ENCODE measurements at regions of chr7 and their contacts with region 1.

Region 1: DNA sequence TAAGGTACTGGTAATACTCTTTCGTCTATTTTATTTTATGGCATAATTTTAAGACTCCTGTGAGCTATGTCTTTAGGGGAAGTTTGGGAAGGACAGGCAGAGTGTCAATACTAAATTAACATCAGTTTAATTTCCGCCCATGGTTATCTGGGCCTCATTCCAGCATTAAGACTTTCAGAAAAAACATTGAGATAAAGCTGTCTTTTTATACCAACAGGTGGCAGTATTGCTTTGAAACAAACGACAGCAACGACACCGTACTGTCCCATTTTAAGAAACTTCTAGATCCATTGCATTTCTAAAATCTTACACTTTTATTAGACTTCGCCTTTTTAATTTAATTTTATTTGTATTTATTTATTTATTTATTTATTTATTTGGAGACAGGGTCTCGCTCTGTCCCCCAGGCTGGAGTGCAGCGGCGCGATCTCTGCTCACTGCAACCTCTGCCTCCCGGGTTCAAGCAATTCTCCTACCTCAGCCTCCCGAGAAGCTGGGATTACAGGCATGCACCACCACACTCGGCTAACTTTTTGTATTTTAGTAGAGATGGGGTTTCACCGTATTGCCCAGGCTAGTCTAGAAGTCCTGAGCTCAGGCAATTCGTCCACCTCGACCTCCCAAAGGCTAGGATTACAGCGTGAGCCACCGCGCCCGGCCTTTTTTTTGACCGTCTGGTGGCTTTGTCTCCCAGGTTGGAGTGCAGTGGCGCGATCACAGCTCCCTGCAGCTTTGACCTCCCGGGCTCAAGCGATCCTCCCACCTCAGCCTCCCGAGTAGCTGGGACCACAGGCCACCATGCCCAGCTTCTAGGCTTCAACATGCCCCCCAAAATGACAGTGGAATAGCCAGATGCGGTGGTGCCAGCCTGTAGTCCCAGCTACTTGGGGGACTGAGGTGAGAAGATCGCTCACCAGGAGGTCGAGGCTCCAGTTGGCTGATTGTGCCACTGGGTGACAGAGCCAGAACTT is 78.7 kb upstream of the C1GALT1 start:
- DNase-seq: no peak
- H3K4me3 ChIP-seq: peak overlapping the region in 1 of 3 donors; percentile 17
- H3K27ac ChIP-seq: peak overlapping the region in 1 of 2 donors; percentile 37
- H3K4me1 ChIP-seq: no peaks in the 10 kb centered on the region
- H3K27me3 ChIP-seq: no peaks in the 10 kb centered on the region
- CTCF ChIP-seq: peak; percentile 60 to 73 (median 67)
- POLR2A ChIP-seq: no peak

Region 2: DNA sequence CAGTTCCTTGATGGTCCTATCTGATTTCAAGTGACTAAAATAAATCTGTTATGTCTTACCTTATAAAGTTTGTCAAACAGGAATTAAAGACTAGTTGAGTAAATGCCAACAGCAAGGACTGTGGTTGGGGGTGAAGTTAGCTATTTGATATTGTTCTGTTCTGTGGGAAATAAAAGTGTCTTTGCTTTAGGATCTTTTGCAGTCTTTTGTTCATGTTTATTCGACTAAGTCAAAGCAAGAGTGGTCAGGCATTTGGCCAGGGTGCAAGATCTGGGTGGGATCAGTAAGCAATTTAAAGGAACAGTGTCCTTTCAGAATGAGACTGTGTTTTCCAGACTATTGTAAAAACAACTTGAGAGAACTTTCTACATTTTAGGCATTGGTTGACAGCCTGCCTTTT is 432.1 kb after region 1 on chr7 and contains the start of gene COL28A1:
- intact Hi-C with region 1: loop called (anchors 10 kb)
- DNase-seq: no peak
- H3K4me3 ChIP-seq: no peak within 1 kb of the TSS
- H3K27ac ChIP-seq: no peak within 1 kb of the TSS
- H3K4me1 ChIP-seq: no peaks in the 10 kb centered on the region
- H3K27me3 ChIP-seq: no peaks in the 10 kb centered on the region
- CTCF ChIP-seq: no peak
- POLR2A ChIP-seq: no peak
- total RNA-seq, gene COL28A1: 1.1 to 5.7 (median 4.9) TPM

Measured in breast epithelium (tissue), 4 donors.